A549 (cell line): ENCODE measurements at regions of chr7 and their contacts with region 1.

Region 1: GRCh38 chr7:107268593-107268992 is 99.8 kb downstream of the HBP1 start:
- DNase-seq: no peak
- ATAC-seq: no peak
- H3K4me3 ChIP-seq: no peak overlapping the region
- H3K27ac ChIP-seq: no peak overlapping the region
- H3K4me1 ChIP-seq: no peaks in the 10 kb centered on the region
- CTCF ChIP-seq: no peak
- EP300 ChIP-seq: no peak
- POLR2A ChIP-seq: no peak
- RAD21 ChIP-seq: no peak

Region 2: DNA sequence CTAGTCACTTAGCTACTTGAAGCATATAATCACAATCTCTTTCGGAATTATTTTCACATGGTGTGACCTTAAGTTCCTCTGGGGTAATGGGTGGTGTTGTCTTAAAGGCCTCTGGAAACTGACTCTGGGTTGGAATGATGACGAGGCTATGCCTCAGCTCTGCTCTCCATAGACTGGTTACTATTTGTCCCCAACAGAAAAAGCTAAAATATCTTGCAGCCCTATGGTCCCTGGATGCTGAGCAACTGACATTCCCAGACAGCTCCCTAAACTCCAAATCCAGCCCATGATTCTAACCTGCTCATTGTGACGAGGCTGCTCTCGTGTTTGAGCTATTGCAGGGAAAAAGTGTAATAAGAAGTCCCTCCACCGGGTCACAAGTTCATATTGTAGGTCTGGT is 48.2 kb before region 1 on chr7:
- CTCF ChIA-PET with region 1: no interaction called
- POLR2A ChIA-PET with region 1: interaction called, 12 read pairs
- DNase-seq: no peak
- ATAC-seq: no peak
- H3K4me3 ChIP-seq: no peak overlapping the region
- H3K27ac ChIP-seq: no peak overlapping the region
- H3K4me1 ChIP-seq: no peaks in the 10 kb centered on the region
- CTCF ChIP-seq: no peak
- EP300 ChIP-seq: no peak
- POLR2A ChIP-seq: no peak
- RAD21 ChIP-seq: no peak

Region 3: GRCh38 chr7:107253599-107253998 is 15.0 kb before region 1 on chr7:
- CTCF ChIA-PET with region 1: no interaction called
- POLR2A ChIA-PET with region 1: no interaction called
- DNase-seq: no peak
- ATAC-seq: no peak
- H3K4me3 ChIP-seq: no peak overlapping the region
- H3K27ac ChIP-seq: no peak overlapping the region
- H3K4me1 ChIP-seq: no peaks in the 10 kb centered on the region
- CTCF ChIP-seq: no peak
- EP300 ChIP-seq: no peak
- POLR2A ChIP-seq: no peak
- RAD21 ChIP-seq: no peak

Region 4: GRCh38 chr7:107462740-107463444 is 194.3 kb after region 1 on chr7:
- CTCF ChIA-PET with region 1: no interaction called
- POLR2A ChIA-PET with region 1: no interaction called
- DNase-seq: peak; percentile 15 to 71
- ATAC-seq: peak; percentile 94 to 99
- H3K4me3 ChIP-seq: no peak overlapping the region
- H3K27ac ChIP-seq: peak overlapping the region in 1 of 2 experiments; percentile 47; a peak in 2 of 6 replicates
- H3K4me1 ChIP-seq: no peaks in the 10 kb centered on the region
- CTCF ChIP-seq: peak; percentile 87
- EP300 ChIP-seq: no peak
- POLR2A ChIP-seq: no peak
- RAD21 ChIP-seq: peak; percentile 89 to 92